BJ (cell line): ENCODE measurements at regions of chr1 and their contacts with region 1.

Region 1: DNA sequence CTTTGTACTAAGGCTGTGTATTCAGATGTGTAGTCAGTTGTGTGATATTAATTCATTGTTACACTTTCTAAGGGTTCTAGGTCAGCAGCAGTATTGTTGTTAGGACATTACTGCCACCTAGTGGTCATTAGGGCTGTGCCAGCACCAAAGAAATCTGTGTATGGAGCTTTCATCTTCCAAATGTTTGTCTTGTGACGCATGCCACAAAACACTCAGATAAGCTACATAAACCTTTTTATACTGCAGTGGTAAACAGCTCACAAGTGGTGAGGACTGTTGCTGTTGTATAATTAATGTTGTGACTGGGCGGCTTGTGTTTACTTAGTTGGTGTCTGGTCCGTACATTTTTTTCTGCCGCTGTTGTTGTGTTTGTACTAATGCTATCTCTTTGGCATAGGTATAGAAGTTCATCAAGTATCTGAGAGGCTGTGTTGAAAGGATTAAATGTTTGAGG is 51.7 kb downstream of the S1PR1 start:
- DNase-seq: peak; percentile 60
- H3K4me3 ChIP-seq: no peak overlapping the region
- H3K27me3 ChIP-seq: no peaks in the 10 kb centered on the region
- CTCF ChIP-seq: peak; percentile 89

Region 2: DNA sequence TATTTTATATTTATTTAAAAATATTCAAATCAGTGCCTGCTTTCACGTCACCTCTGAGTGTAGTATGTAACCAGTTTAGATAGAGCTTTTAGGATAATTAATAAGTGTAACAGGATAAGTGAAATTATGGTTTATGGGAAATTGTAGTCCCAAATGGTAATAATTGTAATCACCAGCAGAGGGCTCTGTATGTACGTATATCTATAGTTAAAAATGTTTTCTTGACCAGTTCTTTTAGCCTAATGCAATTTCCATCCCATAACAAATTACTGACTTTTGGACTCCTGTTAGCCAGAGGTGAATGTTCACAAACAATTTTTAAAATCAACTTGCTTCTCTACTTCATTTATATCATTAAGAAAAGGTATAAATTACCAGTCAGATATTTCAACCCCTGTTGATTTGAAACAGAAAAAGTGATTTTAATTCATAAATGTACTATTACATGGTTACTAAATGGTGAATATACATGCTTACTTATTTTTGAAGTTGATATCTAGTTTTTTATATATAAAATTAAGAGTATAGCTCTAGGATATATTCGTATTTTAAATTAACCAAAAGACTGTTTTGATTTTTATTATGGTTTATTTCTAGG is 367.3 kb before region 1 on chr1:
- CTCF ChIA-PET with region 1: interaction called, 47 read pairs
- POLR2A ChIA-PET with region 1: no interaction called
- DNase-seq: no peak
- H3K4me3 ChIP-seq: no peak overlapping the region
- H3K27me3 ChIP-seq: no peaks in the 10 kb centered on the region
- CTCF ChIP-seq: peak; percentile 48

Region 3: GRCh38 chr1:100928128-100928527 is 360.4 kb before region 1 on chr1:
- CTCF ChIA-PET with region 1: interaction called, 47 read pairs
- POLR2A ChIA-PET with region 1: no interaction called
- DNase-seq: no peak
- H3K4me3 ChIP-seq: no peak overlapping the region
- H3K27me3 ChIP-seq: no peaks in the 10 kb centered on the region
- CTCF ChIP-seq: no peak

Region 4: DNA sequence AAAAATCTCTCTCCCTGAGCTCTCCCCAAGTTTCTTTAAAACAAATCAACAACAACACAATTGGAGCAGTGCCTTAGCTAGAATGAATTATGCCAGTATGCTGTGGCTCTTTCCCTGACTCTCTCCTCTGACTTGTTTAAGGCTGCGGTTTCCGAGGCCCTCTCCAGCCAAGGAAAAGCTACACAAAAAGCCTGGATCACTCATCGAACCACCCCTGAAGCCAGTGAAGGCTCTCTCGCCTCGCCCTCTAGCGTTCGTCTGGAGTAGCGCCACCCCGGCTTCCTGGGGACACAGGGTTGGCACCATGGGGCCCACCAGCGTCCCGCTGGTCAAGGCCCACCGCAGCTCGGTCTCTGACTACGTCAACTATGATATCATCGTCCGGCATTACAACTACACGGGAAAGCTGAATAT is 49.8 kb before region 1 on chr1:
- CTCF ChIA-PET with region 1: interaction called, 23 read pairs
- POLR2A ChIA-PET with region 1: no interaction called
- DNase-seq: no peak
- H3K4me3 ChIP-seq: peak overlapping the region; percentile 72; the same call in 1 of the 2 replicates
- H3K27me3 ChIP-seq: no peaks in the 10 kb centered on the region
- CTCF ChIP-seq: peak; percentile 98

Region 5: GRCh38 chr1:101300916-101301315 is 12.4 kb after region 1 on chr1:
- CTCF ChIA-PET with region 1: interaction called, 11 read pairs
- POLR2A ChIA-PET with region 1: no interaction called
- DNase-seq: no peak
- H3K4me3 ChIP-seq: no peak overlapping the region
- H3K27me3 ChIP-seq: peaks cover 1% of the 10 kb centered on the region; the same call in 1 of the 2 replicates
- CTCF ChIP-seq: no peak